Activated CD4-positive, alpha-beta memory T cell treated with anti-CD3 and anti-CD28 coated beads for 36 hours (primary cell): ENCODE measurements at regions of chr10 and their contacts with region 1.

Region 1: DNA sequence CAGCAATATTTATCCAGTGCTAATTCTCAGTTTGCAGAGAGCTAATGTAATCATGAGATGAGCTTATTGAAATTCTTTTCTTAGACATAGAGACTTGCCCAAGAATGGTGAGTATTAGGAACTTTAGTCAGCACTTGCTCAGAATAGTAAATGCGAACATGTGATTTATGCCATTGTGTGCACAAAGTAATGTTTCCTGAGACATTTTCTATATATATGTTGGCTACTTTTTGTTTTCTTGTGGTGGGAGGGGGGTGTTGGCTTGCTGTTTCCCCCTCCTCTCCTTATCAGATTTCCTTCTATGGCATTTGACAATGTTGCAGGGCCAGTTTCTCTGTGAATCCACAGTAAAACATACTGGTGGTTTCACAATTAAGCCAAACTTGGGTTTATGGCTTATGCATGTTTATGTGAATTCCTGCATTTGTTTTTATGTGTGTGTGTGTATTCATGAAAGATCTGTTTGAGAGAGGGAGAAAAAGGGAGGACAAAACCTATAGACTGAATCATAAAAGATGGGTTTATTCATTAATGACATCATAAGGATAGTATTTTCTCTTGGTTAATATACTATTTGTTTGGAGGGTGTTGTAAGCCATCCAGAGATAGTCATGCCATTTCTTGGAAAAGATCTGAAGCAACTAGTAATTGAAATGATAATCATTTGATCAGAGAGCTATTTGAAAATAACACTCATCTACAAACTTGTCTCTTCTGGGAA is 36.3 kb downstream of the ARID5B start:
- DNase-seq: peak; percentile 30
- H3K4me3 Mint-ChIP-seq: peak overlapping the region; percentile 74
- H3K27ac Mint-ChIP-seq: peak overlapping the region; percentile 92
- H3K4me1 Mint-ChIP-seq: peaks cover 88% of the 10 kb centered on the region
- H3K27me3 Mint-ChIP-seq: no peaks in the 10 kb centered on the region

Region 2: GRCh38 chr10:61896854-61897661 is 40.7 kb before region 1 on chr10:
- CTCF ChIA-PET with region 1: interaction called, 25 read pairs
- POLR2A ChIA-PET with region 1: interaction called, 67 read pairs
- intact Hi-C with region 1: no loop called
- DNase-seq: peak; percentile 70
- H3K4me3 Mint-ChIP-seq: peak overlapping the region; percentile 66
- H3K27ac Mint-ChIP-seq: peak overlapping the region; percentile 95
- H3K4me1 Mint-ChIP-seq: peaks cover 43% of the 10 kb centered on the region
- H3K27me3 Mint-ChIP-seq: no peaks in the 10 kb centered on the region

Region 3: DNA sequence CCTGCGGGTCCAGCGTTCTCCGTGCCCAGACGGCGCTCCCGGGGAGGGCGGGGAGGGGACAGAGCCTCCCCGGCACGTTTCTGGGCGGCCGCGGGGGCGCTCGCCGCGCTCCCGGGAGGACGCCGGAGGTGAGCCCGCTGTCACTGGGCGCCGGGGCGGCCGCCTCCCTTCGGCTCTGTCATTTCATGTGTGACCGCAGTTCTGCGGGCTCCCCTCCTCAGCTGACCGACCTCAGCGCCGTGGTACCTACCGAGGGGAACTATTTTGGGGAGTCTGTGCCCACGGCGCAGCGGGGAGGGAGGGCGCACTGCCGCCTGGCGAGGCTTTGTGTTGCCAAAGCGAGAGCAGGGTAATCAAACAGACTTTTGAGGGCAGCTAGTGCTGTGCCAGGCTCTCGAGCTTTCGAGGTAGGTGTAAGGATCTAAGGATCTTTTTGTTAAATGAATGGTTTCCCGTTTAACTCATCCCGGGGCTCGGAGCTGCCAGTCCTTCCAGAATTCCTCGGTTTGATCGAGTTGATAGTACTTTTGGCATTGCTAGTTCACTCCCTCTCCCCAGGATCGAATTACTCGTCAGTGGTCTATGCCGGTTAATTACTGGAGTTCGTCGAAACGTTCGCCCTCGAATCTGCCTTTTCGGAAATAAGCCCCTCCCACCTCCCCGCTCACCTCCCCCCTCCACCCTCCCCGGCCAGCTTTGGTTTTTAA is 34.4 kb before region 1 on chr10:
- CTCF ChIA-PET with region 1: interaction called, 25 read pairs
- POLR2A ChIA-PET with region 1: interaction called, 67 read pairs
- intact Hi-C with region 1: loop called (anchors 1 kb)
- DNase-seq: peak; percentile 84
- H3K4me3 Mint-ChIP-seq: peak overlapping the region; percentile 90
- H3K27ac Mint-ChIP-seq: peak overlapping the region; percentile 95
- H3K4me1 Mint-ChIP-seq: peaks cover 45% of the 10 kb centered on the region
- H3K27me3 Mint-ChIP-seq: no peaks in the 10 kb centered on the region

Region 4: GRCh38 chr10:61923213-61923949 is 14.4 kb before region 1 on chr10:
- CTCF ChIA-PET with region 1: no interaction called
- POLR2A ChIA-PET with region 1: interaction called, 3 read pairs
- intact Hi-C with region 1: loop called (anchors 2 kb)
- DNase-seq: no peak
- H3K4me3 Mint-ChIP-seq: no peak overlapping the region
- H3K27ac Mint-ChIP-seq: peak overlapping the region; percentile 19
- H3K4me1 Mint-ChIP-seq: peaks cover 50% of the 10 kb centered on the region
- H3K27me3 Mint-ChIP-seq: no peaks in the 10 kb centered on the region

Region 5: DNA sequence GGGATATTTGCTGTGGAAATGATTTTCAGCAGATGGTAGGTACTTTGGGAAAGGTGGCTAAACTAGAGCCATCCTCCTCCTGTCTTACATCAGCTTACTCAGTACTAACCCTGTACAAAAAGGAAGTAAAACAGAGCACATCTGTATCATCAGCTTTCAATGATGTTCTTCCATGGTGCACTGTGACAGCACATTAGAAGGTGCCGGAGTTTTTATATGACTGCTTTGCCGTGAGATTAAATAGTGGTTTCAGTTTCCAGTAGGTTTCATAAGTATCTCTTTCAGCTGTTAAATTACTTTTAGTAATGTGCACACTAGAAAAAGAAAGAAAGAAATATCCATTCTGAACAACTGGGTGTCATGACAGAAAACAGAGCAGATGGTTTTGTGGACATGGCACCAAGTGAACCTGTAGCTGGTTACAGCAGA is 50.2 kb after region 1 on chr10:
- CTCF ChIA-PET with region 1: interaction called, 9 read pairs
- POLR2A ChIA-PET with region 1: interaction called, 33 read pairs
- intact Hi-C with region 1: loop called (anchors 1 kb)
- DNase-seq: peak; percentile 50
- H3K4me3 Mint-ChIP-seq: peak overlapping the region; percentile 59
- H3K27ac Mint-ChIP-seq: peak overlapping the region; percentile 95
- H3K4me1 Mint-ChIP-seq: peaks cover 91% of the 10 kb centered on the region
- H3K27me3 Mint-ChIP-seq: no peaks in the 10 kb centered on the region

Region 6: DNA sequence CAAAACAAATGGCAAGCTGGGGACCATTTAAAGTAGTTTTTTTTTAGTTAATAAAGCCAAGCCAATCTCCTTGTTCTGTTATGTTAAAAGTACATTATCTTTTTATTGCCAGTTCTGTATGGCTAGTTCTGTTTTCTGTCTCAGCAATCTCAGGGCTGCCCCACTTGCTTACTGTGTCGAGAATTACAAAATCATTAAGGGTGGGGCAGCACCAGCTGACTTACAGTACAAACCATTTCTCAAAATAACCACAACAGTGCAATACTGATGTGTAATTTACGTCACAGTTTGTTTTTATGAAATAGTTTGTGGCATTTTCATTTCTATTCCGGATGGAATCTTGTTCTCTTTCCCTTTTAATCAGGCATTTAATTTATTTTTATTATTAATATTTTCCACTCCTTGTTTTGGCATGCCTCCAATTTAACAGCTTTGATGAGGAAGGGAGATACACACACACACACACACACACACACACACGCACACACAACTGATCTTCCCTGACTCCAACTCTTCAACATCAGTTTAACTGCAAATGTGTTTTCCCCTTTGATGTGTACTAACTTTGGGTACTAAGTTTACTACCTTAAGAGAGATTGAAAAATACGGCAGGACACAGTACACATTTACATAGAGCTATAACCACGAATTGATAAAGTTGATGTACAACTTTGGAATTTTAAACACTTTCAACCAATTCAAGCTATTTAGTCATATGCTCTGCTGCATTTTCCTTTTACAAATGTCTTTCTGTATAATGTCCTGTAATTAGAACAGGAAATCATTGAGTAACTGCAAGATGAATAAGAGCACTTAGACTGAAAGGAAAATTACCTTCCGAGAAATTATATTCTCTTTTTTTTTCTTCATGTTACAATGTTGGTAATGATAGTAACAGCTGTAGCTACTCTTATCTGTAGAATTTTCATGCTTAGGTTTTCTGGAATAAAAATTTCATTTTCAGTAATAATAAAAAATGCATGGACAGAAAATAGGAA is 55.2 kb after region 1 on chr10:
- CTCF ChIA-PET with region 1: interaction called, 9 read pairs
- POLR2A ChIA-PET with region 1: interaction called, 33 read pairs
- intact Hi-C with region 1: loop called (anchors 1 kb)
- DNase-seq: peak; percentile 75
- H3K4me3 Mint-ChIP-seq: peak overlapping the region; percentile 57
- H3K27ac Mint-ChIP-seq: peak overlapping the region; percentile 99
- H3K4me1 Mint-ChIP-seq: peaks cover 85% of the 10 kb centered on the region
- H3K27me3 Mint-ChIP-seq: no peaks in the 10 kb centered on the region

Region 7: GRCh38 chr10:62038609-62039190 is 100.9 kb after region 1 on chr10:
- CTCF ChIA-PET with region 1: interaction called, 11 read pairs
- POLR2A ChIA-PET with region 1: interaction called, 3 read pairs
- intact Hi-C with region 1: no loop called
- DNase-seq: peak; percentile 85
- H3K4me3 Mint-ChIP-seq: peak overlapping the region; percentile 47
- H3K27ac Mint-ChIP-seq: peak overlapping the region; percentile 84
- H3K4me1 Mint-ChIP-seq: peaks cover 81% of the 10 kb centered on the region
- H3K27me3 Mint-ChIP-seq: no peaks in the 10 kb centered on the region